Psoas muscle (tissue), 8 donors: ENCODE measurements at regions of chr3 and their contacts with region 1.

Region 1: DNA sequence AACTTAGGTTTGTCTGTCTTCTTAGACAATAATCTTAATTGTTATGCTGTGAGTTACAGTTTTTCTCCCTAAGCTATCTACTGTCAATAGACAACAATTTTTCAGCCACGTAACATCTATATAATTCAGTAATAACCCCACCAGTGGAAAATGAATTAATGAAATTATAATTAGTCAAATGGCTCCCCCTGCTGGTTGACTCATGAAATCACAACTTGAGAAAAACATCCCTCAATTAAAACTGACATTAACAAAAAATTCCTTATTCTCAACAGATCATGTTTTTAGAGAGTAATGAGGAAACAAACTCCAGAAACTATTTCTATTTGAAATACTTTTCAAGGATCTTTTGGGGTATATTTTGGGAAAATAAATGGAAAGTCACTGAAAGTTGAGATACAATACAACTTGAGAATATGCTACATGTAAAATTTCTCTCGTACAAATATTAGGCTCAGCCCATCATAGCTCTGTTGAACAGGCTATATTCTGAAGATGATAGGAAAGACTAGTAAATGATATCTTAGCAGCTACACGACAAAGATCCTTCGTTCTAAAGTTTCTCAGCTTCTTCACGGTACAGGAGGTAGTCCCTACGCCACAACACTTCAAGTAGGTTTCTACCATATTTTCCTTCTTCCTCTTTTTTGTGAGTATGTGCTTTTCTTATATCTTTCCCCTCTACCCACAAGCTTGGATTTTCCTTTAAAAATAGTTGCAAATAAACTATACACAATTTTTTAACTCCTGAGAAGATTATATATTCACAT is 20.7 kb downstream of the PPP1R2 start:
- DNase-seq: no peak
- ATAC-seq: no peak
- H3K4me3 ChIP-seq: no peak overlapping the region
- H3K27ac ChIP-seq: no peak overlapping the region
- H3K4me1 ChIP-seq: peaks cover 9% of the 10 kb centered on the region
- H3K27me3 ChIP-seq: no peaks in the 10 kb centered on the region
- CTCF ChIP-seq: peak; percentile 83

Region 2: GRCh38 chr3:195271116-195271858 is 251.2 kb before region 1 on chr3 and contains the start of gene XXYLT1:
- intact Hi-C with region 1: loop called (anchors 2 to 5 kb)
- DNase-seq: peak; percentile 92 to 94
- ATAC-seq: peak; percentile 96 to 98 (median 98)
- H3K4me3 ChIP-seq: peak within 1 kb of the TSS; percentile 83
- H3K27ac ChIP-seq: peak within 1 kb of the TSS; percentile 83
- H3K4me1 ChIP-seq: peaks cover 12% of the 10 kb centered on the region
- H3K27me3 ChIP-seq: no peaks in the 10 kb centered on the region
- CTCF ChIP-seq: peak; percentile 80
- total RNA-seq, gene XXYLT1: 1.8 to 3.5 (median 2.3) TPM

Region 3: GRCh38 chr3:195450731-195451229 is 71.7 kb before region 1 on chr3:
- intact Hi-C with region 1: loop called in 1 of 2 experiments (anchors 5 kb)
- DNase-seq: peak; percentile 15 to 57
- ATAC-seq: peak in 3 of 4 donors; percentile 58 to 72 (median 67)
- H3K4me3 ChIP-seq: no peak overlapping the region
- H3K27ac ChIP-seq: no peak overlapping the region
- H3K4me1 ChIP-seq: no peaks in the 10 kb centered on the region
- H3K27me3 ChIP-seq: no peaks in the 10 kb centered on the region
- CTCF ChIP-seq: no peak

Region 4: DNA sequence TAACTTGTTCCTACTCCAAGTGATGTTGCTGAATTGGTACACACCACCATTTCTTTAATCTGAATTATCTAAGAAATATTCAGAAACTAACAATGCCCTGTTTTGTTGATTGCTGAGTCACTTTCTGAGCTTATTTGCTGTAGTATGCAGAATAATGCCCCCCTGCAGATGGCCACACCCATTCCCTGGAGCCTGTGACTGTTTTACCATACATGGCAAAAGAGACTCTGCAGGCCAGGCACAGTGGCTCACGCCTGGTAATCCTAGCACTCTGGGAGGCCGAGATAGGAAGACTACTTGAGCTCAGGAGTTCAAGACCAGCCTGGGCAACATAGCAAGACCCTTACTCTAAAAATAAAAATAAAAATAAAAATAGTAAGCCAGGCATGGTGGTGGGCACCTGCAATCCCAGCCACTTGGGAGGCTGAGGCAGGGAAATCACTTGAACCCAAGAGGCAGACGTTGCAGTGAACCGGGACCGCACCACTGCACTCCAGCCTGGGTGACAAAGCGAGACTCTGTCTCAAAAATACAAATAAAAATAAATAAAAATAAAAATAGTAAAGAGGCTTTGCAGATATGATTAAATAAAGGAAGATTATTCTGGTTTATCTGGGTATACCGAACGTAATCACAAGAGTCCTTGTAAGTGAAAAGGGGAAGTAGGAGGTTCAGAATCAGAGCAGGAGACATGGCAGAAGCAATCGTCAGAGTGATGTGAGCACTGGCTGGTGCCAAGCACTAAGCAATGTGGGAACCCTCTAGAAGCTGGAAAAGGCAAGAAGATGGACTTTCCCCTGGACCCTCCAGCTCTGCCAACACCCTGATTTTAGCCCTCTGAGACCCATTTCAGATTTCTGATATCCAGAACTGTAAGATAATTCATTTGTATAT is 746.1 kb after region 1 on chr3:
- intact Hi-C with region 1: no loop called
- DNase-seq: no peak
- ATAC-seq: no peak
- H3K4me3 ChIP-seq: no peak overlapping the region
- H3K27ac ChIP-seq: no peak overlapping the region
- H3K4me1 ChIP-seq: peaks cover 10% of the 10 kb centered on the region
- H3K27me3 ChIP-seq: no peaks in the 10 kb centered on the region
- CTCF ChIP-seq: no peak